HEK293 (cell line): ENCODE measurements at regions of chr17 and their contacts with region 1.

Region 1: GRCh38 chr17:46193626-46194392 is 580 bp upstream of the KANSL1 start:
- H3K4me3 ChIP-seq: peak overlapping the region; percentile 87
- H3K27ac ChIP-seq: peak overlapping the region; percentile 99
- H3K4me1 ChIP-seq: peaks cover 33% of the 10 kb centered on the region
- CTCF ChIP-seq: peak; percentile 10

Region 2: GRCh38 chr17:45747911-45748310 is 445.9 kb before region 1 on chr17:
- CTCF ChIA-PET with region 1: no interaction called
- POLR2A ChIA-PET with region 1: no interaction called
- H3K4me3 ChIP-seq: no peak overlapping the region
- H3K27ac ChIP-seq: no peak overlapping the region
- H3K4me1 ChIP-seq: no peaks in the 10 kb centered on the region
- CTCF ChIP-seq: no peak

Region 3: GRCh38 chr17:45889579-45889978 is 304.2 kb before region 1 on chr17:
- CTCF ChIA-PET with region 1: no interaction called
- POLR2A ChIA-PET with region 1: no interaction called
- H3K4me3 ChIP-seq: no peak overlapping the region
- H3K27ac ChIP-seq: no peak overlapping the region
- H3K4me1 ChIP-seq: 0 out of 2 replicates have a peak, but pooled peaks cover 3% of the 10 kb centered on the region
- CTCF ChIP-seq: no peak

Region 4: GRCh38 chr17:46049656-46050055 is 144.2 kb before region 1 on chr17:
- CTCF ChIA-PET with region 1: interaction called, 26 read pairs
- POLR2A ChIA-PET with region 1: interaction called, 9 read pairs
- H3K4me3 ChIP-seq: no peak overlapping the region
- H3K27ac ChIP-seq: no peak overlapping the region
- H3K4me1 ChIP-seq: peaks cover 10% of the 10 kb centered on the region
- CTCF ChIP-seq: no peak

Region 5: GRCh38 chr17:46089389-46089965 is 104.3 kb before region 1 on chr17:
- CTCF ChIA-PET with region 1: interaction called, 10 read pairs
- POLR2A ChIA-PET with region 1: no interaction called
- H3K4me3 ChIP-seq: no peak overlapping the region
- H3K27ac ChIP-seq: no peak overlapping the region
- H3K4me1 ChIP-seq: no peaks in the 10 kb centered on the region
- CTCF ChIP-seq: no peak

Region 6: DNA sequence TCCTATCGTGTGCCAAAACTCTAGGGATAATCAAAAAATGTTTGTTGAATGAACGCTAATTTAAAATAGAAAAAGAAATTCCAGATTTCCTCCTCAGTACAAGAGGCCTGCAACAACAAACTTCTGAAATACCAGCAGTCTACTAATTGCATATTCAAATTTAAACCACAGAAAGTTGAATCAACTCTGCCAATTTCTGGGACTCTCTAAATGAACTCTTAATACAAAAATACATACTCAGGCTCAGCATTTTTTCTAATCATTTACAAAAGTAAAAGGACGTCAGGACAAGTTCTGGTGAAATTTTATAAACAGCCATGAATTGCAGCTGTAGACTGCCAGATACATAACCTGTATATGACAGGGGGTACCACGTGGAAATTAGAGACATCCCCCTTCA is 49.6 kb before region 1 on chr17:
- CTCF ChIA-PET with region 1: interaction called, 20 read pairs
- POLR2A ChIA-PET with region 1: interaction called, 8 read pairs
- H3K4me3 ChIP-seq: no peak overlapping the region
- H3K27ac ChIP-seq: no peak overlapping the region
- H3K4me1 ChIP-seq: peaks cover 33% of the 10 kb centered on the region
- CTCF ChIP-seq: no peak

Region 7: GRCh38 chr17:46205975-46206374 is 12.2 kb after region 1 on chr17:
- CTCF ChIA-PET with region 1: interaction called, 96 read pairs
- POLR2A ChIA-PET with region 1: interaction called, 5 read pairs
- H3K4me3 ChIP-seq: no peak overlapping the region
- H3K27ac ChIP-seq: no peak overlapping the region
- H3K4me1 ChIP-seq: no peaks in the 10 kb centered on the region
- CTCF ChIP-seq: no peak